ENCODE measurements at regions of chr5 and their contacts with region 1.

Region 1: DNA sequence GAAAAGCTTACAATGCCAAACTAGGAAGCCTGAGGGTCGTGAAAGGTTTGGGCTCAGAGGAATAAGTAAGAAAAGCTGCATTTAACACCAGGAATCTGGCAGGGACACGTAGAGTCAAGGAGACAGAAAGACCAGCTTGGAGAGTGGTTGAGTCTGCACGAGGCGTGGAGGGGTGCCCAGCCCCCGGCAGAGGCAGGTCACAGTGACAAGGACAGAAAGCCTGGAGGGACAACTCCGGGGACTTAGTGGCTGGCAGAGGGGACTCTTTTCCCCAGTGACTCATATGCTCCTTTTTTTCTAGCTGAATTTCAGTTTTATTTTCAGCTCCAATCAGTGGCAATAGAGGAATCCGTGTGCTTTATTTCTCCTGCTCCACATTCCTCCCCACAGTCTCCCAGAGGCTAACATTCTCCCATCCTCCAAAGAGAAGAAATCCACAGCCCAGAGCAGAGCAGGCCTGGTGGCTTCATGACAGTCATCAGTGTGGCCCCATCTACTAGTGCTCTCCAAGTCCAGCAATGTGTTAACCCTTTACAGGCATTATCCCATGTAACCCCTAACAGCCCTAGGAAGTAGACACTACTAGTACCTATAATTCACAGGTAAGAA is 80.7 kb downstream of the KCNIP1 start:
- DNase-seq: no peak
- H3K4me3 ChIP-seq: no peak overlapping the region
- H3K27ac ChIP-seq: no peak overlapping the region
- H3K4me1 ChIP-seq: no peaks in the 10 kb centered on the region
- H3K27me3 ChIP-seq: no peaks in the 10 kb centered on the region
- CTCF ChIP-seq: no peak
- POLR2A ChIP-seq: no peak

Region 2: GRCh38 chr5:171826132-171826531 is 1241.6 kb after region 1 on chr5:
- intact Hi-C with region 1: loop called (anchors 10 kb)
- DNase-seq: no peak
- H3K4me3 ChIP-seq: no peak overlapping the region
- H3K27ac ChIP-seq: no peak overlapping the region
- H3K4me1 ChIP-seq: no peaks in the 10 kb centered on the region
- H3K27me3 ChIP-seq: no peaks in the 10 kb centered on the region
- CTCF ChIP-seq: no peak
- POLR2A ChIP-seq: no peak

Measured in breast epithelium (tissue), 4 donors.